PC-3 (cell line): ENCODE measurements at regions of chrX and their contacts with region 1.

Region 1: DNA sequence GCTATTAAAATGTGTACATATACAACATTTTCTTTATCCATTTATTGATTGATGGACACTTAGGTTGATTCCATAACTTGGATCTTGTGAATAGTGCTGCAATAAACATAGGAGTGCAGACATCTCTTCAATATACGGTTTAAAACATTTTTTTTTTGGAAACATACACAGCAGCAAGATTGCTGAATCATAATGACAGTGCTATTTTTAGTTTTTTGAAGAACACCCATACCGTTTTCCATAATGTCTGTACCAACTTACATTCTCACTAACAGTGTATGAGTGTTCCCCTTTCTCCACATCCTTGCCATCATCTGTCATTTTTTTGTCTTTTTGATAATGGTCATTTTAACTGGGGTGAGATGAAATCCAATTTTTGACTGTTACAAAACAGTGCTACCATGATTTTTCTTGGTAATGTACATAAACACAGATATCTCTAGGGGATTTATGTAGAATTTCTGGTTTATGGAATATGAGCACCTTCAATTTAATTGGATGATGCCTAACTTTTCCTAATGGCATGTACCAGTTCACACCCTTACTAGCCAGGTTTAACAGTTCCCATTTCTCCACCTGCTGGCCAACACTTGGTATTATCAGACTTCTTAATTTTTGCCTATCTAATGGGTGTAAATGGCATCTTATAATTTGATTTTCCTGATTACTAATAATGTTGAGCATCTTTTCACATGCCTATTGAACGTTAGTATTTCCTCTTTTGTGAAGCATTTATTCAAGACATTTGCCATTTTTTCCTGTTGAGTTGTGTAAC is 21.0 kb upstream of the TMSB15B start:
- DNase-seq: peak; percentile 44
- ATAC-seq: peak; percentile 29
- H3K4me3 ChIP-seq: no peak overlapping the region
- H3K27ac ChIP-seq: no peak overlapping the region
- H3K4me1 ChIP-seq: no peaks in the 10 kb centered on the region; the same call in 1 of the 2 replicates
- H3K27me3 ChIP-seq: no peaks in the 10 kb centered on the region
- CTCF ChIP-seq: peak; percentile 71

Region 2: GRCh38 chrX:103918581-103919269 is 22.7 kb before region 1 on chrX:
- CTCF ChIA-PET with region 1: no interaction called
- POLR2A ChIA-PET with region 1: no interaction called
- intact Hi-C with region 1: loop called (anchors 1 kb)
- DNase-seq: peak; percentile 72
- ATAC-seq: peak; percentile 82
- H3K4me3 ChIP-seq: peak overlapping the region; percentile 82
- H3K27ac ChIP-seq: peak overlapping the region; percentile 38
- H3K4me1 ChIP-seq: peaks cover 6% of the 10 kb centered on the region
- H3K27me3 ChIP-seq: no peaks in the 10 kb centered on the region
- CTCF ChIP-seq: no peak